MCF 10A (cell line): ENCODE measurements at regions of chr15 and their contacts with region 1.

Region 1: GRCh38 chr15:44501768-44502366 is 35.1 kb upstream of the EIF3J start:
- DNase-seq: peak; percentile 49
- H3K4me3 Mint-ChIP-seq: no peak overlapping the region
- H3K27ac Mint-ChIP-seq: no peak overlapping the region
- H3K4me1 Mint-ChIP-seq: no peaks in the 10 kb centered on the region
- H3K27me3 Mint-ChIP-seq: no peaks in the 10 kb centered on the region
- CTCF ChIP-seq: peak; percentile 58

Region 2: DNA sequence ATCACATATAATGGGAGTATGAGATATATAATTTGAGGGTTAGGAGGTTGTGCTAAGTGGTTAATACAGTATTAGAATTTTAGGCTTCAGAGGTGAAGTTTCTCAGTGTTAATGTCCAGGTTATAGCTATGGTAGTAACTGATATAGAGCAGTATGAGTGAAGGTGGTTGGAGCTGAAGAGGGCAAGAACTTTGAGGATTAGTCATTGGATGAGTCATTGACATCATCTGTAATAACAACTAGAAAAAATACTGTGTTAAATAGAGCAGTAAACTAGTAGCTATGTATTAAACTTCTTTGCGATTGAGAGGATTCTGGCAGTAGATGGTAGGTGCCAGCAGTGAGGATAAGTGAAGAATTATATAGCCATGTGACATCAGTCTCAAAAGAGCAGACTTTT is 12.4 kb before region 1 on chr15:
- CTCF ChIA-PET with region 1: interaction called, 7 read pairs
- POLR2A ChIA-PET with region 1: interaction called, 11 read pairs
- intact Hi-C with region 1: no loop called
- DNase-seq: peak; percentile 70
- H3K4me3 Mint-ChIP-seq: no peak overlapping the region
- H3K27ac Mint-ChIP-seq: peak overlapping the region; percentile 36
- H3K4me1 Mint-ChIP-seq: peaks cover 27% of the 10 kb centered on the region
- H3K27me3 Mint-ChIP-seq: no peaks in the 10 kb centered on the region
- CTCF ChIP-seq: no peak

Region 3: DNA sequence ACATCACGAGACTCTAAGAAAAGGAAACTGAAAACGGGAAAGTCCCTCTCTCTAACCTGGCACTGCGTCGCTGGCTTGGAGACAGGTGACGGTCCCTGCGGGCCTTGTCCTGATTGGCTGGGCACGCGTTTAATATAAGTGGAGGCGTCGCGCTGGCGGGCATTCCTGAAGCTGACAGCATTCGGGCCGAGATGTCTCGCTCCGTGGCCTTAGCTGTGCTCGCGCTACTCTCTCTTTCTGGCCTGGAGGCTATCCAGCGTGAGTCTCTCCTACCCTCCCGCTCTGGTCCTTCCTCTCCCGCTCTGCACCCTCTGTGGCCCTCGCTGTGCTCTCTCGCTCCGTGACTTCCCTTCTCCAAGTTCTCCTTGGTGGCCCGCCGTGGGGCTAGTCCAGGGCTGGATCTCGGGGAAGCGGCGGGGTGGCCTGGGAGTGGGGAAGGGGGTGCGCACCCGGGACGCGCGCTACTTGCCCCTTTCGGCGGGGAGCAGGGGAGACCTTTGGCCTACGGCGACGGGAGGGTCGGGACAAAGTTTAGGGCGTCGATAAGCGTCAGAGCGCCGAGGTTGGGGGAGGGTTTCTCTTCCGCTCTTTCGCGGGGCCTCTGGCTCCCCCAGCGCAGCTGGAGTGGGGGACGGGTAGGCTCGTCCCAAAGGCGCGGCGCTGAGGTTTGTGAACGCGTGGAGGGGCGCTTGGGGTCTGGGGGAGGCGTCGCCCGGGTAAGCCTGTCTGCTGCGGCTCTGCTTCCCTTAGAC is 209.7 kb after region 1 on chr15 and contains the start of gene B2M:
- CTCF ChIA-PET with region 1: no interaction called
- POLR2A ChIA-PET with region 1: no interaction called
- intact Hi-C with region 1: no loop called
- DNase-seq: peak; percentile 98
- H3K4me3 Mint-ChIP-seq: peak within 1 kb of the TSS; percentile 92
- H3K27ac Mint-ChIP-seq: peak within 1 kb of the TSS; percentile 96
- H3K4me1 Mint-ChIP-seq: peaks cover 23% of the 10 kb centered on the region
- H3K27me3 Mint-ChIP-seq: no peaks in the 10 kb centered on the region
- CTCF ChIP-seq: no peak
- total RNA-seq, gene B2M: 605 and 755 TPM in 2 replicates